Caki2 (cell line): ENCODE measurements at regions of chr17 and their contacts with region 1.

Region 1: DNA sequence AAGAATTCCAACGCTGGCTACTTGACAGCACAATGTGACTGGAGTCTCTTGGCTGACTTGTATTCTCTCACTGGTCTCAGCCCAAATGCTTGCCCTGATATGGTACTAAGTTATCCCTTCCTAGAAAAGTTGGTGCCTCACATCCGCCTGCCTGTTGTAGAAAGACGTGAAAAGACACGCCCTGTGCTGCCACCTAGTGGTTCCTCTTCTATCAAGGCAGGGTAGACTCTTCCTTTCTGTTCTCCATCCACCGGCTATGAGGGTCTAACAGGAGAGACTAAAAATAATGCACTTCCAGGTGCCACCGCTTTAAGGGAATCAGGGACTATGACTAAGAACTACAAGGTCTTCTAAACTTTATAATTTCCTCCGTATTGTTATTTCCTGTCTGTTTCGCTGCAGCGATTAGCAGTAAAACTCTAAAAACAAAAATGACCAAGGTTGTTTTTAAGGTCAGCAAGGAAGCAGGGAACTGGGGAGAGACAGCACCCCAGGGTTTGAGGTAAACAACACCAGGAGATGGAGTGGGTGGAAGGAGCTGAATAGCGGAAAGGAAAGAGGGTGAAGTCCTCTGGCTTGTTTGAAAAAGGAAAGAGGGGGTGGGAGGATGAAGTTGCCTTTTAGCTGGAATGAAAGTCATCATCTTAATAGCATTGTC is 109.5 kb downstream of the YPEL2 start:
- DNase-seq: peak; percentile 77

Region 2: GRCh38 chr17:59331129-59331928 is 109.6 kb before region 1 on chr17 and contains the start of gene YPEL2:
- in situ Hi-C with region 1: loop called (anchors 25 kb)
- DNase-seq: peak; percentile 85
- total RNA-seq, gene YPEL2: 0.23 and 3.0 TPM in 2 replicates